ENCODE measurements at regions of chr15 and their contacts with region 1.

Region 1: DNA sequence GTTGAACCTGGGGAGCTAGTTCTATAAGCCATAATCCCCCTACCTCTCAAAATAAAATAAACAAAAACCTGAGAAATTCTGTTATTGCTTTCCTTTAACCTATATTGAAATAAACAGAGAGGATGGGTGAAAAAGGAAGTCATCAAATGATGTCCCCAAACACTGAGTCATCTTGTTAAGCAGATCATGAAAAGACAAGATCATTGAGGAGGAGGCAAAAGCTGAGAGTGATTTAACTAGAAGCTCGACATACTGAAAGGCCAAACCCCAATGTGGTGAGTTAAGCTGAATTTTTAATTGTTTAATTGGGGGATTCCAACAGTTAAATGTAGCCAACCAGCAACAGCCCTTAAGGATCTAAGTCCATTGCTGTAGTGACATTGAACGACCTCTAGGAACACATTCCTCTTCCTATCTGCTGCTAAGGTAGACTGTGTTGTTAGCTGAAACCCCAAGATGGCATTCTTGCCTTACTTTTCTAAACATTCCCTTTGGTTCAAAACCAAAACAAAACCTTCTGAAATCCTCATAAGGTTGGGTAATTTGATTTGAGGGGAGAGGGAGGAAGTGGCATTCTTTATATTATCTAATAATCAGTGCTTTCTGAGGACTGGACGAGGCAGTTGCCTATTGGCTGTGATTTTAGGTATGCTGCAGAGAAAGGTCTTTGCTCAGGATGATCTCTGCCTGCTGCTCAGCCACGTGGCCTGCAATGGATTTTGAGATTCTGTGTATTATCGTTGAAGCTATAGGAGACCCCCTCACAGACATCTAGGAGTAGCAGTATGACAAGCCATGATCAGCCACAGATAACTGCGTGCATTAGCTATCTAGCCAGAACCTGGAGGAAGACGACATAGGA is 62.7 kb upstream of the BNIP2 start:
- DNase-seq: no peak
- H3K4me3 ChIP-seq: no peak overlapping the region
- H3K27ac ChIP-seq: no peak overlapping the region
- H3K4me1 ChIP-seq: no peaks in the 10 kb centered on the region
- H3K27me3 ChIP-seq: peaks cover 6% of the 10 kb centered on the region; the same call in 1 of the 2 replicates
- CTCF ChIP-seq: peak; percentile 27; the same call in 1 of the 2 replicates
- EP300 ChIP-seq: no peak
- RAD21 ChIP-seq: peak; percentile 47

Region 2: GRCh38 chr15:59741274-59741906 is 10.4 kb before region 1 on chr15:
- CTCF ChIA-PET with region 1: interaction called, 12 read pairs
- POLR2A ChIA-PET with region 1: no interaction called
- DNase-seq: peak; percentile 52
- H3K4me3 ChIP-seq: no peak overlapping the region
- H3K27ac ChIP-seq: no peak overlapping the region
- H3K4me1 ChIP-seq: no peaks in the 10 kb centered on the region; a peak in 1 of 4 replicates
- H3K27me3 ChIP-seq: no peaks in the 10 kb centered on the region; the same call in 1 of the 2 replicates
- CTCF ChIP-seq: no peak
- EP300 ChIP-seq: no peak
- RAD21 ChIP-seq: peak; percentile 73